A549 (cell line): ENCODE measurements at regions of chr2 and their contacts with region 1.

Region 1: DNA sequence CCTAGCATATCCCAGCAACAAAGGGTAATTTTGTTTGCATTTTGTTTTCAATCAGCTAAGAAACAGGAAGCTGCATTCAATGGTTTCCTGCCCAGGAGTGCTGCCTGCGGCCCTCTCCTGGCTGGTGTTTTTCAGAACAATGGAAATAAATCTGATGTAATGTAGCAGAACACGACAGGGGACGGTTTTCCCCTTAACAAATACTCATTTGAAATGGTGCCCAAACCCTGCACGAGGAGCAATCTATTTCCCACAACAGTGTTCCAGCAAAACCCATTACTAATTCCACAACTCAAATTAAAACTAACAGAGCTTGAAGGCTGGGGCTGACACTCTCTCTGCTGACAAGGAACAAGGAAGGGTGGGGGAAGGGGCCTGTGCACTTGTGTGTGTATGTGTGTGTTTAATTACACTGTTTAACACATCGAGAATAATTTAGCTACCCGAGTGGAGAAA is 8.7 kb downstream of the CAPN13 start:
- DNase-seq: no peak
- ATAC-seq: no peak
- H3K4me3 ChIP-seq: no peak overlapping the region
- H3K27ac ChIP-seq: no peak overlapping the region
- H3K4me1 ChIP-seq: no peaks in the 10 kb centered on the region
- CTCF ChIP-seq: no peak
- EP300 ChIP-seq: no peak
- POLR2A ChIP-seq: no peak
- RAD21 ChIP-seq: no peak

Region 2: DNA sequence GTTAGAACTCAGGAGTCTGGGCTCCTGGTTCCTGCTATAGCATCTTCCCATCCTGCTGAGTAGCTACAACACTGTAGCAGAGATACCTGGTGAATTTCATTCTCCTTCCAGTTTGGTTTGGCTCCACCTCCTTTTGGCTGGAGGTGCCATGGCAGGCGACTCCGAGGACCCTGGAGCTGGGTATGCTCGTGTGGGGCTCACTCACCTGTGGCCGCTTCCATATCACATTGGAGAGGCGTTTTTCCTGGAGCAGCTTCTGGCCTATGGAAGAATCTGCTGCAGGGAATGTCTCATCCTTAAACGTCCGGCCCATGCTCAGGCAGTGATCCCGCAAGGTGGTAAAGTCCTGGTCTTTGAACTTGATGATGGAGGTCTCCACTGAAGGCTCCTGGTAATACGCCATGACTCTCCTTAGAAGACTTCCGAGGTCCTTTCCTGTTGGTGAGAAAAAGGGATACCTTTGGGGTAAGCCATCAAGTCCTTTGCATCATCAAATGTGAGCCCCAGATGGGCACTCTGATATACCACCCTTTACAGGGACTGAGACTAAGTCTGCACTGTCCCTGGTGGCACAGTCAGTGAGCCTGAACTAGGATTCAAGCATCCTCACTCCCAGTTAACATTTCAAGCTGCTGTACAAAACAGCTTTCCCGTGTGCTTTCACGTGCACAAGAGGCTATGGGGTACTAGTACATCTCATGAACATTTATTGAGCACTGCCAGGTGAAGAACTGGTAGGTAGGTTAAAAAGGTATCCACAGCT is 11.5 kb before region 1 on chr2:
- CTCF ChIA-PET with region 1: interaction called, 11 read pairs
- POLR2A ChIA-PET with region 1: no interaction called
- DNase-seq: no peak
- ATAC-seq: no peak
- H3K4me3 ChIP-seq: no peak overlapping the region
- H3K27ac ChIP-seq: no peak overlapping the region
- H3K4me1 ChIP-seq: no peaks in the 10 kb centered on the region
- CTCF ChIP-seq: no peak
- EP300 ChIP-seq: no peak
- POLR2A ChIP-seq: no peak
- RAD21 ChIP-seq: no peak

Region 3: DNA sequence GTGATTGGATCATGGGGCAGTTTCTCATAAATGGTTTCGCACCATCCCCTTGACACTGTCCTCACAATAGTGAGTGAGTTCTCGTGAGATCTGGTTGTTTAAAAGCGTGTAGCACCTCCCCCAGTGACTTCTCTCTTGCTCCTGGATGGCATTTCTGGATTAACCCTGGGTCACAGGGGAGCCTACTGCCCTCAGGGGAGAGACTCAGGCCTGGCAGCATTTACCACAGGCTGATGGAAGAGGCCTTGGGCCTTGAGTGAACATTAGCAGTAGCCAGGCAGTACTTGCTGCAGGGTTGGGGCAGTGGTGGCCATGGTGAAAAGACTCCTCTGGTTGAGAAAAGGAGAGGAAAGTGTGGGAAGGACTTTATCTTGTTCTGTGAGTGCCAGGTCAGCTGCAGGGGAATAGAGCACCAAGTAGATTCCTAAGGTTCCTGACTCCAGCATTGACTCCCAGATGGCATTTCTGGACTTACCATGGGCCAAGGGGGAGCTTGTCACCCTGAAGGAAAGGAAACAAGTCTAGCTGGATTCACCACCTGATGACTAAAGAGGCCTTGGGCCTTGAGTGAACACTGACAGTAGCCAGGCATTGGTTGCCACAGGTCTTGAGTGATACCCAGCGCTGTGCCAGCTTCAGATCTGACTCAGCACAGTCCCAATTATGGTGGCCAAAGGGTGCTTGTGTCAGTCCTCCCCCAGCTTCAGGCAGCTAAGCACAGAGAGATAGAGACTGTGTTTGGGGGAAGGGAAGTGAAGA is 48.6 kb after region 1 on chr2:
- CTCF ChIA-PET with region 1: no interaction called
- POLR2A ChIA-PET with region 1: no interaction called
- DNase-seq: no peak
- ATAC-seq: no peak
- H3K4me3 ChIP-seq: no peak overlapping the region
- H3K27ac ChIP-seq: no peak overlapping the region
- H3K4me1 ChIP-seq: no peaks in the 10 kb centered on the region
- CTCF ChIP-seq: no peak
- EP300 ChIP-seq: no peak
- POLR2A ChIP-seq: no peak
- RAD21 ChIP-seq: no peak

Region 4: GRCh38 chr2:31207790-31208189 is 409.2 kb after region 1 on chr2:
- CTCF ChIA-PET with region 1: no interaction called
- POLR2A ChIA-PET with region 1: no interaction called
- DNase-seq: no peak
- ATAC-seq: no peak; a peak in 1 of 6 replicates
- H3K4me3 ChIP-seq: no peak overlapping the region
- H3K27ac ChIP-seq: no peak overlapping the region
- H3K4me1 ChIP-seq: no peaks in the 10 kb centered on the region
- CTCF ChIP-seq: no peak
- EP300 ChIP-seq: no peak
- POLR2A ChIP-seq: no peak
- RAD21 ChIP-seq: no peak